ENCODE measurements at regions of chr12 and their contacts with region 1.

Region 1: GRCh38 chr12:56224102-56224701 is at the start of gene NABP2:
- DNase-seq: peak; percentile 99
- H3K4me3 ChIP-seq: peak within 1 kb of the TSS; percentile 42 to 65 (median 57)
- H3K27ac ChIP-seq: peak within 1 kb of the TSS; percentile 98 to 99 (median 98)
- H3K4me1 ChIP-seq: peaks cover 0 to 47% (median 45%) of the 10 kb centered on the region in 4 donors
- H3K27me3 ChIP-seq: no peaks in the 10 kb centered on the region
- CTCF ChIP-seq: peak; percentile 84 to 94 (median 88)
- EP300 ChIP-seq: no peak
- POLR2A ChIP-seq: peak in 1 of 2 donors; percentile 21
- total RNA-seq, gene NABP2: 17.2 to 33.5 (median 31.6) TPM

Region 2: DNA sequence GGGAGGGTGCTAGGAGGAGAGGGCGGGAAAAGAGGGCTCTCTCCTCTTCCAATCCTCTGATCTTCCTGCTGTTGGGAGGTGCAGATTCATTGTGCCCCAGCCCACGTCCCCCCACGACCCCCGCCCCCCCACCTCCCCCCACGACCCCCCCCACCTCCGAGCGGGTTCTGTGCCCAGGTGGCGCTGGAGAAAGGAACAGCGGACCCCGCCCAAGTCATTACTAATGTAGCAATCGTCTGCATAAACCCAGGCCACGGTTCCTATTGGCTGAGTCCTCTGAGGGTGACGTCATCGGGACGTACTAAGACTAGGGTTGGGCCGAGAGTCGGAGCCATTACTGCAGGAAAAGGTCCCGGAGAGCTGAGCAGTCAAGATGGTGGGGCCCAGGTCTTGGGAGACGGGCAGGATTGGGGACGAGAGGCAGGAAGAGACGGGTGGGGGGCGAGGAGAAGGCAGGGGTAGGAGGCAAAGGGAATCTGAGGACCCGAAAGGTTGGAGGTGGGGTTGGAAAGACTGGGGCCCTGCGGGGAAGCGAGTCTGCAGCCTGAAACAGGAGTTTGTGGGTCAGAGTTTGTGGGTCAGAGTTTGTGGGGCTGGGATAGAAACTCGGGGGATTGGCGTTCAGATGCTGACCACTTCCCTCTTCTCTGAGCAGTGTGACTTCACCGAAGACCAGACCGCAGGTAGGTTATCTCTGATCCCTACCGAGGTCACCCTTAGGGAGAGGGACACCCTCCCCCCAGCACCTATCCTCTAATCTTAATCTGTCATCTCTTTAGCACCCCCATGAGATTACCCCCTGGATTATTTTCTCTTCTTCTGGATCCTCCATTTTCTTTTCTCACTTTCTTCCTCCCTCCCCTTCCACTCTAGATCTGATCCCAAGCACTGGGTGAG is 65.9 kb before region 1 on chr12 and contains the start of gene MYL6:
- intact Hi-C with region 1: loop called (anchors 2 kb)
- DNase-seq: peak; percentile 99
- H3K4me3 ChIP-seq: peak within 1 kb of the TSS; percentile 61 to 99 (median 78)
- H3K27ac ChIP-seq: peak within 1 kb of the TSS; percentile 93 to 99 (median 94)
- H3K4me1 ChIP-seq: peaks cover 0 to 59% (median 43%) of the 10 kb centered on the region in 4 donors
- H3K27me3 ChIP-seq: no peaks in the 10 kb centered on the region
- CTCF ChIP-seq: no peak
- EP300 ChIP-seq: no peak
- POLR2A ChIP-seq: peak; percentile 100
- total RNA-seq, gene MYL6: 6,491 to 9,553 (median 8,571) TPM

Region 3: GRCh38 chr12:56206457-56207166 is 17.6 kb before region 1 on chr12:
- intact Hi-C with region 1: loop called (anchors 2 kb)
- DNase-seq: peak; percentile 77
- H3K4me3 ChIP-seq: no peak overlapping the region
- H3K27ac ChIP-seq: peak overlapping the region; percentile 12 to 51 (median 36)
- H3K4me1 ChIP-seq: peaks cover 0 to 5% (median 0%) of the 10 kb centered on the region in 4 donors
- H3K27me3 ChIP-seq: no peaks in the 10 kb centered on the region
- CTCF ChIP-seq: peak; percentile 41 to 72 (median 64)
- EP300 ChIP-seq: no peak
- POLR2A ChIP-seq: no peak

Region 4: GRCh38 chr12:56288456-56289387 is 64.5 kb after region 1 on chr12:
- intact Hi-C with region 1: no loop called
- DNase-seq: no peak
- H3K4me3 ChIP-seq: no peak overlapping the region
- H3K27ac ChIP-seq: no peak overlapping the region
- H3K4me1 ChIP-seq: peaks cover 0 to 25% (median 12%) of the 10 kb centered on the region in 4 donors
- H3K27me3 ChIP-seq: no peaks in the 10 kb centered on the region
- CTCF ChIP-seq: no peak
- EP300 ChIP-seq: no peak
- POLR2A ChIP-seq: no peak

Region 5: DNA sequence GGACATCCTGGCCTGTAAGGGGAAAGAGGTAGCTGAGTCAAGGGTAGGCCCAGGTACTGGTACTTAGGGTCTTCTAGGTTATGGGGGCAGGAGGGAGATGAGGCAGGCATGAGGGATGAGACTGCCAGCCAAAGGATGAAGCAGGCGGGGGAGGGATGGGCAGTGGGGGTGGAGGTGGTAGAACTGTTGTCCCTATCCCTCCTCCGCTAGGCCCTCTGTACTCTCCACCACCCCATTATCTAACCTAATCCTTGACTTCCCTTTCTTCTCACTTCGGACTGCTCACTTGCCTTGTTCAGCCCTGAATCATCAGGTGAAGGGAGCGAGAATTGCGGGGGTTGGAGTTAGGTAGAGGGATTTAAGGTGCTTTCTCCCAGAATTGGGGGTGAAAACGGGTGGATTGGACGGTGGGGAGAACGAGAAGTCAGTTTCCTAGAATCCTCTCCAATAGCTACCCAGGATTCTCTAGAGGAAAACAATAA is 109.0 kb after region 1 on chr12:
- intact Hi-C with region 1: no loop called
- DNase-seq: no peak
- H3K4me3 ChIP-seq: peak overlapping the region; percentile 38 to 71 (median 62)
- H3K27ac ChIP-seq: peak overlapping the region; percentile 88 to 96 (median 94)
- H3K4me1 ChIP-seq: peaks cover 0 to 22% (median 12%) of the 10 kb centered on the region in 4 donors
- H3K27me3 ChIP-seq: no peaks in the 10 kb centered on the region
- CTCF ChIP-seq: no peak
- EP300 ChIP-seq: no peak
- POLR2A ChIP-seq: no peak

Region 6: GRCh38 chr12:56387152-56387736 is 163.0 kb after region 1 on chr12:
- intact Hi-C with region 1: no loop called
- DNase-seq: no peak
- H3K4me3 ChIP-seq: no peak overlapping the region
- H3K27ac ChIP-seq: no peak overlapping the region
- H3K4me1 ChIP-seq: no peaks in the 10 kb centered on the region
- H3K27me3 ChIP-seq: no peaks in the 10 kb centered on the region
- CTCF ChIP-seq: no peak
- EP300 ChIP-seq: no peak
- POLR2A ChIP-seq: no peak

Region 7: GRCh38 chr12:57299514-57300016 is 1075.4 kb after region 1 on chr12:
- intact Hi-C with region 1: no loop called
- DNase-seq: no peak
- H3K4me3 ChIP-seq: no peak overlapping the region
- H3K27ac ChIP-seq: no peak overlapping the region
- H3K4me1 ChIP-seq: no peaks in the 10 kb centered on the region
- H3K27me3 ChIP-seq: no peaks in the 10 kb centered on the region
- CTCF ChIP-seq: no peak
- EP300 ChIP-seq: no peak
- POLR2A ChIP-seq: no peak

Measured in sigmoid colon (tissue), 7 donors.